Heart left ventricle (tissue), 16 donors: ENCODE measurements at regions of chr3 and their contacts with region 1.

Region 1: GRCh38 chr3:69385723-69386555 is at the start of gene FRMD4B:
- DNase-seq: peak; percentile 79 to 91 (median 85)
- ATAC-seq: peak; percentile 80 to 96 (median 93)
- H3K4me3 ChIP-seq: peak within 1 kb of the TSS; percentile 11 to 84 (median 70)
- H3K27ac ChIP-seq: peak within 1 kb of the TSS in 11 of 12 donors; percentile 55 to 90 (median 81)
- H3K4me1 ChIP-seq: peaks cover 0 to 56% (median 17%) of the 10 kb centered on the region in 12 donors
- H3K27me3 ChIP-seq: no peaks in the 10 kb centered on the region
- CTCF ChIP-seq: peak in 9 of 12 donors; percentile 12 to 52 (median 31)
- POLR2A ChIP-seq: no peak
- total RNA-seq, gene FRMD4B: 7.2 to 42.8 (median 11.4) TPM

Region 2: GRCh38 chr3:69324362-69325025 is 61.4 kb before region 1 on chr3:
- intact Hi-C with region 1: loop called in 1 of 10 experiments (anchors 10 kb)
- DNase-seq: peak in 1 of 5 donors; percentile 40
- ATAC-seq: peak in 3 of 4 donors; percentile 23 to 60 (median 32)
- H3K4me3 ChIP-seq: no peak overlapping the region
- H3K27ac ChIP-seq: peak overlapping the region in 3 of 12 donors; percentile 23 to 90 (median 83)
- H3K4me1 ChIP-seq: peaks cover 0 to 97% (median 42%) of the 10 kb centered on the region in 12 donors
- H3K27me3 ChIP-seq: no peaks in the 10 kb centered on the region
- CTCF ChIP-seq: peak in 11 of 12 donors; percentile 29 to 64 (median 51)
- POLR2A ChIP-seq: no peak

Region 3: GRCh38 chr3:69330891-69331400 is 55.0 kb before region 1 on chr3:
- intact Hi-C with region 1: loop called in 4 of 10 experiments (anchors 10 kb)
- DNase-seq: peak in 2 of 5 donors; percentile 42 to 44
- ATAC-seq: peak; percentile 53 to 85 (median 80)
- H3K4me3 ChIP-seq: peak overlapping the region in 1 of 12 donors; percentile 11
- H3K27ac ChIP-seq: peak overlapping the region in 11 of 12 donors; percentile 1 to 88 (median 71)
- H3K4me1 ChIP-seq: peaks cover 0 to 72% (median 50%) of the 10 kb centered on the region in 12 donors
- H3K27me3 ChIP-seq: no peaks in the 10 kb centered on the region
- CTCF ChIP-seq: no peak
- POLR2A ChIP-seq: no peak

Region 4: DNA sequence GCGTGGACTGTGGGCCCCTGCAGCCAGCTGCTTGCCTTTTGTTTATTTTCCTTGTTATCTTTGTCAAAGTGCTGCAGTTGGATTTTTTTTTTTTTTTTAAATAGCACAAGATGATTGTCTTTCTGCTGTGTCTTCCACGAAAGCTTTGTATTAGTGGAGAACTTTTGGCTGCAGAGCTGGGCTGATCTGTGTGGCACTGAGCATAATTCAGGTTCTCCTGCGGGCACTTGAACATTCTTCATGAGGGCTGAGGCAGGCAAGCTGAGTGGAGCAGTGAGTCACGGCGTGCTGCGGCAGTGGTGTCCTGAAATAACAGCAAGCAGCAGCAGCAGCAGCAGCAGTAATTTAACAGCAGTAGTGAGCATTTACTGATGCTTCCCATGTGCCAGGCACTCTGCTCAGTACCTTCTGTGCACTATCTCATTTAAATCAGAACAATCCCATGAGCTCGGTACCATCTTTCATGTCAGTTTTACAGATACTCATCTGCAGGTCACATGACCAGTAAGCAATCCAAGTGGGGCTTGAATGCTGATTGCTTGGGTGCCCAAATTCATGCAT is 399.1 kb after region 1 on chr3:
- intact Hi-C with region 1: no loop called
- DNase-seq: peak; percentile 34 to 81 (median 77)
- ATAC-seq: peak; percentile 57 to 90 (median 82)
- H3K4me3 ChIP-seq: no peak overlapping the region
- H3K27ac ChIP-seq: peak overlapping the region in 11 of 12 donors; percentile 9 to 70 (median 46)
- H3K4me1 ChIP-seq: peaks cover 0 to 65% (median 45%) of the 10 kb centered on the region in 12 donors
- H3K27me3 ChIP-seq: no peaks in the 10 kb centered on the region
- CTCF ChIP-seq: no peak
- POLR2A ChIP-seq: no peak